ENCODE measurements at regions of chr22 and their contacts with region 1.

Region 1: GRCh38 chr22:18947905-18948304 is 11.8 kb upstream of the PRODH start:
- DNase-seq: no peak
- H3K4me3 ChIP-seq: no peak overlapping the region
- H3K27ac ChIP-seq: no peak overlapping the region
- H3K4me1 ChIP-seq: no peaks in the 10 kb centered on the region
- H3K27me3 ChIP-seq: peaks cover 25% of the 10 kb centered on the region
- CTCF ChIP-seq: no peak

Region 2: GRCh38 chr22:18970176-18970947 is 22.5 kb after region 1 on chr22:
- CTCF ChIA-PET with region 1: no interaction called
- POLR2A ChIA-PET with region 1: no interaction called
- intact Hi-C with region 1: no loop called
- DNase-seq: no peak
- H3K4me3 ChIP-seq: peak overlapping the region; percentile 44; the same call in 1 of the 2 replicates
- H3K27ac ChIP-seq: no peak overlapping the region
- H3K4me1 ChIP-seq: no peaks in the 10 kb centered on the region
- H3K27me3 ChIP-seq: peaks cover 6% of the 10 kb centered on the region; the same call in 1 of the 2 replicates
- CTCF ChIP-seq: no peak

Region 3: GRCh38 chr22:19085233-19085718 is 137.4 kb after region 1 on chr22:
- CTCF ChIA-PET with region 1: no interaction called
- POLR2A ChIA-PET with region 1: no interaction called
- intact Hi-C with region 1: no loop called
- DNase-seq: no peak
- H3K4me3 ChIP-seq: no peak overlapping the region
- H3K27ac ChIP-seq: no peak overlapping the region
- H3K4me1 ChIP-seq: no peaks in the 10 kb centered on the region; the same call in 1 of the 2 replicates
- H3K27me3 ChIP-seq: no peaks in the 10 kb centered on the region
- CTCF ChIP-seq: no peak; the same call in 1 of the 2 replicates

Region 4: DNA sequence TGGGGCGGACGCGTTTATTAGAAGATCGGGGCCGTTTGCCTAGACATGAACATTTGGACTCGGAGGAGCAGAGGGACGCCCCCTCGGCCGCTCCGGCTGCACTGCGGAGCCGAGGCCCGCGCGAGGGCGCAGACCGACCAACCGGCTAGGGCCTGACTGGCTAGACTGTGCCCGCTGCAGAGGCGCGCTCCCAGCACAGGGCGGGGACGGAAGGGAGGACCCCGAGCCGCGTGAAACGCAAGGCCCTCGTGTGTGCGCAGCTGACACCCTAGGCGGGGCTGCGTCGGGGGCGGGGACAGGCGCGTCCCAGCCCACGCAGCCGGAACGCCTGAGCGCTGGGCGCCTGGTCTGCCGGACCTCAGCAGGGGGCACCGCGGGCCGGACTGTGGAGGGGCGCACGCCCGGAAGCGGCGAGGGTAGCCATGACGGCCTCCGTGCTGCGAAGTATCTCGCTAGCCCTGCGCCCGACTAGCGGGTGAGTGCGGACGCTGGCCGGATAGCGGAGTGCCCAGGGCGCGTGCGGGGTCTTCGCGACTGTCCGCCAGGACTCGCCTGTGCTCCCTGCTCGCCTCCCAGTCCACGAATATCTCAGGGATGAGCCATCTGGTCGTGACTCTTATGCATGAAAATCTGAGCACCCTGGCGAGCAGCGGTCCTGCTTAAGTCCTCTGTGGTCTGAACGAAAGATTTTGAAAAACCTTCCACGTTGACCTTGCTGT is 484.4 kb after region 1 on chr22 and contains the start of gene MRPL40:
- CTCF ChIA-PET with region 1: interaction called, 11 read pairs
- POLR2A ChIA-PET with region 1: no interaction called
- intact Hi-C with region 1: no loop called
- DNase-seq: peak; percentile 70 to 87
- H3K4me3 ChIP-seq: peak within 1 kb of the TSS; percentile 97
- H3K27ac ChIP-seq: peak within 1 kb of the TSS; percentile 63; the same call in 1 of the 2 replicates
- H3K4me1 ChIP-seq: peaks cover 8% of the 10 kb centered on the region
- H3K27me3 ChIP-seq: no peaks in the 10 kb centered on the region
- CTCF ChIP-seq: no peak
- total RNA-seq, gene MRPL40: 21.1 and 25.1 TPM in 2 replicates

Region 5: DNA sequence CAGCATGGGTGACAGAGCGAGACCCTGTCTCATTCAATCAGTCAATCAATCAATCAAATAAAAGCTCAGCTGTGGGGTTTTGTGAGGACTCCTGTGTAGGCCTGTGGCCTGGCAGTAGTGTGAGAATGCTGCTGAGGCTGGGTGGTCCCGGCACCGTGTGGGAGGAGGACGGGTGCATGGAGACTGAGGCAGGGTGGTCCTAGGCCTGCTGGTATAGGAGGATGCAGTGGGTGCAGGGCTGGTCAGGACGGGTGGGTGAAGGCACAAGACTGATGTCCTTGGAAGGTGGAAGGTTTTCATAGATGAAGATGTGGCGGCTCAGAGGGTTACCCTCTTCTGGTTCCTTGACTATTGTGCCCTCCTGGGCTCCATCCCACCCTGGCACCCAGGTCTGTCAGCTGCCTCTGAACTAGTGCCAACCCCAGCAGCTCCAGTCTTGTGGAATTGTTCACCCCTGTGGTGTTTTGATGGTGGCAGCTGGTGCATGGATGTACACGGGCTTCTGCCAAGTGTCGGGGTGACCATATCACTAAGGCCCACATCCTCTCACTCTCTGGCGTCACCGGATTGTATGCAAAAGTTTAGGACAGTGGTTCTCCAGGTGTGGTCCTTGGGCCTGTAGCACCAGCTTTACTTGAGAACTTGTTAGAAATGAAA is 1096.7 kb after region 1 on chr22:
- CTCF ChIA-PET with region 1: no interaction called
- POLR2A ChIA-PET with region 1: no interaction called
- intact Hi-C with region 1: no loop called
- DNase-seq: no peak
- H3K4me3 ChIP-seq: no peak overlapping the region
- H3K27ac ChIP-seq: no peak overlapping the region
- H3K4me1 ChIP-seq: no peaks in the 10 kb centered on the region
- H3K27me3 ChIP-seq: no peaks in the 10 kb centered on the region
- CTCF ChIP-seq: no peak

Measured in PC-9 (cell line).